MCF 10A (cell line): ENCODE measurements at regions of chr1 and their contacts with region 1.

Region 1: GRCh38 chr1:62368989-62369388 is 49.8 kb upstream of the KANK4 start:
- DNase-seq: no peak
- H3K4me3 Mint-ChIP-seq: no peak overlapping the region
- H3K27ac Mint-ChIP-seq: no peak overlapping the region
- H3K4me1 Mint-ChIP-seq: no peaks in the 10 kb centered on the region
- H3K27me3 Mint-ChIP-seq: no peaks in the 10 kb centered on the region
- CTCF ChIP-seq: no peak

Region 2: DNA sequence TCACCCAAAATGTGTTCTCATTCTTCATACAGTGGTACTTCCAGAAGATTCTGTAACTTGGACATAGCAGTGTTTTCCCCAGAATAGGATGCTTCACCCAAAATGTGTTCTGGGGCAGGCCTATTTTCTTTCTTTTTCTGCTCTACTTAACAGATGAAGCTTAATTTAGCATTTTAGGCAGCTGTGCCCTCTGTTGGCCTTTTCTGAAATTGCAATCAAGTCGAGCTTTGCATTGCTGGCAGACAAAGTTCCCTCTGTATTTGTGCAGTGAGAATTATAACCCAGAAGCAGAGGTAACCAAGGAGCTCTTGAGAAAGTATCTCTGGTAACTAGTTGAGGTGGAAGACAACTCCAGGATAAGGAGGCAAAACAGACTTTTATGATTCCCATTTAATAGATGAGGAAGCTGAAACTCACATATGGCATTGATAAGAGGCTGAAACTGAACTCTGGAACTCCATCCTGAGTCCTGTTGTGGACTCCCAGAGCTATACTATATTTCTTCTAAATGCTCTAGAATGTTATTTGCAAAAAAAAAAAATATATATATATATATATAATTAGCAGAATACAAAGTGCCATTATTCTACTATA is 224.7 kb before region 1 on chr1:
- CTCF ChIA-PET with region 1: no interaction called
- POLR2A ChIA-PET with region 1: no interaction called
- intact Hi-C with region 1: no loop called
- DNase-seq: peak; percentile 60
- H3K4me3 Mint-ChIP-seq: no peak overlapping the region
- H3K27ac Mint-ChIP-seq: no peak overlapping the region
- H3K4me1 Mint-ChIP-seq: peaks cover 6% of the 10 kb centered on the region
- H3K27me3 Mint-ChIP-seq: no peaks in the 10 kb centered on the region
- CTCF ChIP-seq: peak; percentile 62

Region 3: DNA sequence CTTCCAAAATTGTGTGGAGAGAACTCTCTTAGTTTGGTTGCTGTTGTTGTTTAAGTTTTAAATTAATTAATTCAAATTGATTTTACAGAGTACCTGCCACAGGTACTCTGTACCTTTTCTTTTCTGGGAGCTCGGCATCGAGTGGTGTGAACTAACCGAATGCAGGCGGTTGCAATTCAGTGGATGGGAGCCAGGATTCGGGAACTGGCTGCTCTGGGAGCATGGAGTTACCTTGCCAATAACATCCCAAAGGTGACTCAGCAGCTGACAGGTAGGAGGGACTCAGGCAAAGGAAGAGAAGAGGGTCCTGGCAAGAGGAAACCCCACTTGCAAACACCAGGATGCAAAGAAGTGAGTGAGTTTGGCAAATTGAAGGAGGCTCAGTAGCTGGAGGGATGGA is 25.1 kb before region 1 on chr1:
- CTCF ChIA-PET with region 1: no interaction called
- POLR2A ChIA-PET with region 1: no interaction called
- intact Hi-C with region 1: loop called (anchors 2 kb)
- DNase-seq: no peak
- H3K4me3 Mint-ChIP-seq: no peak overlapping the region
- H3K27ac Mint-ChIP-seq: no peak overlapping the region
- H3K4me1 Mint-ChIP-seq: no peaks in the 10 kb centered on the region
- H3K27me3 Mint-ChIP-seq: no peaks in the 10 kb centered on the region
- CTCF ChIP-seq: no peak